ENCODE measurements at regions of chr5 and their contacts with region 1.

Region 1: GRCh38 chr5:141602606-141603005 is 16.2 kb downstream of the DIAPH1 start:
- DNase-seq: no peak
- H3K4me3 ChIP-seq: no peak overlapping the region
- H3K27ac ChIP-seq: no peak overlapping the region
- H3K4me1 ChIP-seq: no peaks in the 10 kb centered on the region
- H3K27me3 ChIP-seq: no peaks in the 10 kb centered on the region
- CTCF ChIP-seq: no peak
- POLR2A ChIP-seq: no peak

Region 2: GRCh38 chr5:141633871-141634561 is 31.4 kb after region 1 on chr5:
- intact Hi-C with region 1: loop called (anchors 1 kb)
- DNase-seq: no peak
- H3K4me3 ChIP-seq: no peak overlapping the region
- H3K27ac ChIP-seq: no peak overlapping the region
- H3K4me1 ChIP-seq: peaks cover 9 to 19% of the 10 kb centered on the region in 2 donors
- H3K27me3 ChIP-seq: no peaks in the 10 kb centered on the region
- CTCF ChIP-seq: no peak
- POLR2A ChIP-seq: no peak